PC-3 (cell line): ENCODE measurements at regions of chr12 and their contacts with region 1.

Region 1: DNA sequence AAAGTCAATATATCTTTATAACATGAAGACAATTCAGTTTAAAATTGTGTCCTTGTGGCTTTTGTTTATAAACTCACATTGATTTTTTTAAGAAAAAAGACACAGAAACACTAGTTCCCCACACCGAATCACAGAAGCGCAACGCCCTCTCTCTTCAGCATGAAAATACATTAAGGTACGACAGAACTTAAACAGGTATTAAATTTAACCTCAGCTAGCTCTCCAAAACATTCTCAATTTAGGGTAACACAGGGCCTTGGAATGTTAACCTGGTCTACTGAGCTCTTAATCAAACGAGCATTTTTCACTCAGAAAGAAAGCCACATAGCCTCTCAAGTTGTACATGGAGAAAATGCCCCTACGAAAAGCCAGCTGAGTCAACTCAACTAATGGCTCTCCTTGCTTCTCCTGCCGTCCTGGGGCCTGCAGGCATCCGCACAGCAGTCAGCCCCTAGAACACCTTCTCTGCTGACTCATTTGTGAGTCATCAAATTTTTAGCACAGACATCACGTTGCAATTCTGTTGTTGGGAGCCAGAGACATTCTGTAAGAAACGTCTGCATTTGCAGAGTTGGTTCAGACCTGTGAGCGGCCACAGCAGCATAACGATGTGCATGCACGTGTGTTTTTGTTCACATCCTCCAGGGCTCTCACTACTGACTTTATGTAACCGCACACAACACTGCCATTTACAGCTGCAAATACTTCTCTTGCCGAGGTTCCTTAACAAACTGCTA is 141.6 kb downstream of the ITPR2 start:
- DNase-seq: peak; percentile 100
- ATAC-seq: peak; percentile 92
- H3K4me3 ChIP-seq: peak overlapping the region; percentile 39
- H3K27ac ChIP-seq: peak overlapping the region; percentile 48
- H3K4me1 ChIP-seq: peaks cover 47% of the 10 kb centered on the region
- H3K27me3 ChIP-seq: no peaks in the 10 kb centered on the region
- CTCF ChIP-seq: no peak

Region 2: GRCh38 chr12:25839455-25839854 is 851.9 kb before region 1 on chr12:
- CTCF ChIA-PET with region 1: no interaction called
- POLR2A ChIA-PET with region 1: no interaction called
- intact Hi-C with region 1: loop called (anchors 1 kb)
- DNase-seq: peak; percentile 98
- ATAC-seq: peak; percentile 98
- H3K4me3 ChIP-seq: peak overlapping the region; percentile 1; the same call in 1 of the 2 replicates
- H3K27ac ChIP-seq: peak overlapping the region; percentile 81
- H3K4me1 ChIP-seq: peaks cover 23% of the 10 kb centered on the region
- H3K27me3 ChIP-seq: no peaks in the 10 kb centered on the region
- CTCF ChIP-seq: no peak

Region 3: GRCh38 chr12:26629864-26630263 is 61.5 kb before region 1 on chr12:
- CTCF ChIA-PET with region 1: no interaction called
- POLR2A ChIA-PET with region 1: no interaction called
- intact Hi-C with region 1: loop called (anchors 2 kb)
- DNase-seq: peak; percentile 41
- ATAC-seq: peak; percentile 28; the same call in 1 of the 2 replicates
- H3K4me3 ChIP-seq: 0 out of 2 replicates have a peak overlapping the region, but pooled peaks have one; percentile 8
- H3K27ac ChIP-seq: peak overlapping the region; percentile 46
- H3K4me1 ChIP-seq: peaks cover 55% of the 10 kb centered on the region
- H3K27me3 ChIP-seq: no peaks in the 10 kb centered on the region
- CTCF ChIP-seq: peak; percentile 79

Region 4: GRCh38 chr12:26783131-26783526 is 91.7 kb after region 1 on chr12:
- CTCF ChIA-PET with region 1: no interaction called
- POLR2A ChIA-PET with region 1: interaction called, 17 read pairs
- intact Hi-C with region 1: no loop called
- DNase-seq: no peak
- ATAC-seq: no peak
- H3K4me3 ChIP-seq: no peak overlapping the region
- H3K27ac ChIP-seq: no peak overlapping the region
- H3K4me1 ChIP-seq: peaks cover 17% of the 10 kb centered on the region
- H3K27me3 ChIP-seq: no peaks in the 10 kb centered on the region
- CTCF ChIP-seq: no peak